ENCODE measurements at regions of chr2 and their contacts with region 1.

Region 1: GRCh38 chr2:8219631-8220355 is 462.1 kb upstream of the ID2 start:
- DNase-seq: no peak
- H3K4me3 ChIP-seq: no peak overlapping the region
- H3K27ac ChIP-seq: no peak overlapping the region
- H3K4me1 ChIP-seq: peaks cover 18% of the 10 kb centered on the region
- H3K27me3 ChIP-seq: no peaks in the 10 kb centered on the region
- CTCF ChIP-seq: no peak

Region 2: GRCh38 chr2:7707723-7708122 is 512.1 kb before region 1 on chr2:
- CTCF ChIA-PET with region 1: no interaction called
- POLR2A ChIA-PET with region 1: no interaction called
- intact Hi-C with region 1: no loop called
- DNase-seq: no peak
- H3K4me3 ChIP-seq: no peak overlapping the region
- H3K27ac ChIP-seq: no peak overlapping the region
- H3K4me1 ChIP-seq: no peaks in the 10 kb centered on the region
- H3K27me3 ChIP-seq: no peaks in the 10 kb centered on the region
- CTCF ChIP-seq: no peak

Region 3: GRCh38 chr2:8408560-8409460 is 189.0 kb after region 1 on chr2:
- CTCF ChIA-PET with region 1: no interaction called
- POLR2A ChIA-PET with region 1: interaction called, 10 read pairs
- intact Hi-C with region 1: no loop called
- DNase-seq: no peak
- H3K4me3 ChIP-seq: no peak overlapping the region
- H3K27ac ChIP-seq: no peak overlapping the region
- H3K4me1 ChIP-seq: peaks cover 27% of the 10 kb centered on the region
- H3K27me3 ChIP-seq: no peaks in the 10 kb centered on the region
- CTCF ChIP-seq: no peak

Region 4: DNA sequence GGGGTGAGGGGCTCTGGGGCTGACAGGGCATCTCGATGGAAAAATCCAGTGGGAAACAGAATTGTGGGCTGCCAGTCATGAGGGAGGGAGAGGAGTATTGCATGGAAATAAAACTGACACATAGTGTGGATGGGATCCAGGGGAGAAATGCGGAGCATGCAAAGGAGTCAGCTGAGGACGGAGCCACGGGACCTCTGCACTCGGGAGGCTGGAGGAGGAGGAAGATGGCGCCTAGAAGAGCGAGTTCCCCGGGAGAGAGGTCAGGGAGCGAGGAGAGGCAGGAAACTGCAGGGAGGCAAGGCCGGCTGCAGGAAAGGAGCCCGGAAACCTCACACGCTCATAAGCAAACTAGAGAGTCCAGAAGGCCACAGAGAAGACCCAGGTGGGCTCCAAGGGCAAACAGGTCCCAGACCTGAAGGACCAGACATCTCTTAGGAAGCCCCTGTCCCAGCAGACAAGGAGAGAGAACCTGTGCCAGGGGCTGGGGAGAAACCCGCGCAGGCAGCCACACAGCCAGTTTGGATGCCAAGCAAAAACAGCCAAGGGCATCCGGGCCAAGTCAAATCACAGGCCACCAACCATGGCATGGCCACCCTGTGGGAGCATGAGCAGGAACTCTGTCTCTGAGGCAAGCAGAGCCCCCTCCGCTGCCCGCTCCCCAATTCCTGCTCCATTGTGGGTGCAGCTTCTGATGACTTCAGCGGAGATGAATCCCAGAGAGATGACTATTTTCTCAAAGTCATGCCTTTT is 243.3 kb after region 1 on chr2:
- CTCF ChIA-PET with region 1: no interaction called
- POLR2A ChIA-PET with region 1: interaction called, 28 read pairs
- intact Hi-C with region 1: no loop called
- DNase-seq: no peak
- H3K4me3 ChIP-seq: no peak overlapping the region
- H3K27ac ChIP-seq: no peak overlapping the region
- H3K4me1 ChIP-seq: no peaks in the 10 kb centered on the region
- H3K27me3 ChIP-seq: no peaks in the 10 kb centered on the region
- CTCF ChIP-seq: no peak

Region 5: GRCh38 chr2:8514796-8515758 is 295.3 kb after region 1 on chr2:
- CTCF ChIA-PET with region 1: no interaction called
- POLR2A ChIA-PET with region 1: no interaction called
- intact Hi-C with region 1: no loop called
- DNase-seq: no peak
- H3K4me3 ChIP-seq: no peak overlapping the region
- H3K27ac ChIP-seq: no peak overlapping the region
- H3K4me1 ChIP-seq: no peaks in the 10 kb centered on the region
- H3K27me3 ChIP-seq: no peaks in the 10 kb centered on the region
- CTCF ChIP-seq: no peak